Transverse colon (tissue), 4 donors: ENCODE measurements at regions of chr6 and their contacts with region 1.

Region 1: GRCh38 chr6:8080362-8081151 is 16.4 kb upstream of the BLOC1S5 start:
- DNase-seq: no peak
- H3K4me3 ChIP-seq: no peak overlapping the region
- H3K27ac ChIP-seq: no peak overlapping the region
- H3K4me1 ChIP-seq: peaks cover 0 to 5% (median 0%) of the 10 kb centered on the region in 4 donors
- H3K27me3 ChIP-seq: no peaks in the 10 kb centered on the region
- CTCF ChIP-seq: no peak
- EP300 ChIP-seq: no peak
- POLR2A ChIP-seq: no peak

Region 2: DNA sequence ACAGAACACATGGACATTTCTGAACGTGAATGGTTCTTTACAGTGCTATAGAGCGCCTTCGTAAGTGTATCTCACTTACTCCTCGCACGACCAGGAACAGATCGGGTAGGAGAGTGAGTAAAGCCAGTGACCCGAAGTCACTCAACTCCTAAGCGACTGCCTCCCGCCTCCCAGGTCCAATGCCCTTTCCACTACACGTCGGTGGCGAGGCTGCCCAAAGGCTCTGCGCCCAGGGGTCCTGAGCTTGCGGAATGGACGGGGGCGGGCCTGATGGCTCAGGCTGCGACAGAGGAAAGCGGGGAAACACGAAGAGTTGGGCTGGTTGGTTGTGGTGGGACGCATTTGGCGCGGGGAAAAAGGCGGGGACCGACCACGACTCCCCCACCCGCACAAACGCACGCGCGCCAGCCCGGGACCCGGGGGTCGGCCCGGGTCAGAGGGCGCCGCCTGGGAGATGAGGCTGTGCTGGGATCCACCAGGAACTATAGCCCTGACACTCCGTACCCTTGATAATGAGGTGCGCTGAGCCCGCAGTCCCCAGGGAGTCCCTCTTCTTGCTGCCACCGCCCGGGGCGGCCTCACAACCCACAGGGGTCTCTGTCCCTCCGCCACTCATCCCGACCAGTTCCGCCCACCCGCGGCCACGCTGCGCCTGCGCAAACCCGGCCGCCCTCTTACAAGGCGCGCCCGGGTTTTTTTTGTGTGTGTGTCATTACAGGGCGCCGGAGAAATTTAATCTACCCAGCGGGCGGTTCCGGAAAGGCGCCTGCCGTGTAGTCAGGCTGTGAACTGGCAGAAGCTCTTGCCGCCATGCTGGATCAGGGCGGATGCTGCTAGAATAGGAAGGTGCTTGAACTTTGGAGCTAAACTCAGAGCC is 16.6 kb before region 1 on chr6 and contains the start of gene BLOC1S5:
- in situ Hi-C with region 1: no loop called
- intact Hi-C with region 1: loop called (anchors 1 kb)
- DNase-seq: peak; percentile 98
- H3K4me3 ChIP-seq: peak within 1 kb of the TSS; percentile 78 to 89 (median 82)
- H3K27ac ChIP-seq: peak within 1 kb of the TSS; percentile 88 to 93 (median 89)
- H3K4me1 ChIP-seq: peaks cover 0 to 16% (median 10%) of the 10 kb centered on the region in 4 donors
- H3K27me3 ChIP-seq: no peaks in the 10 kb centered on the region
- CTCF ChIP-seq: peak in 3 of 5 experiments; percentile 5 to 39 (median 26)
- EP300 ChIP-seq: peak; percentile 34
- POLR2A ChIP-seq: peak; percentile 64
- total RNA-seq, gene BLOC1S5: 2.0 to 12.7 (median 10.3) TPM